Dorsolateral prefrontal cortex (tissue), 120 donors: ENCODE measurements at regions of chr1 and their contacts with region 1.

Region 1: DNA sequence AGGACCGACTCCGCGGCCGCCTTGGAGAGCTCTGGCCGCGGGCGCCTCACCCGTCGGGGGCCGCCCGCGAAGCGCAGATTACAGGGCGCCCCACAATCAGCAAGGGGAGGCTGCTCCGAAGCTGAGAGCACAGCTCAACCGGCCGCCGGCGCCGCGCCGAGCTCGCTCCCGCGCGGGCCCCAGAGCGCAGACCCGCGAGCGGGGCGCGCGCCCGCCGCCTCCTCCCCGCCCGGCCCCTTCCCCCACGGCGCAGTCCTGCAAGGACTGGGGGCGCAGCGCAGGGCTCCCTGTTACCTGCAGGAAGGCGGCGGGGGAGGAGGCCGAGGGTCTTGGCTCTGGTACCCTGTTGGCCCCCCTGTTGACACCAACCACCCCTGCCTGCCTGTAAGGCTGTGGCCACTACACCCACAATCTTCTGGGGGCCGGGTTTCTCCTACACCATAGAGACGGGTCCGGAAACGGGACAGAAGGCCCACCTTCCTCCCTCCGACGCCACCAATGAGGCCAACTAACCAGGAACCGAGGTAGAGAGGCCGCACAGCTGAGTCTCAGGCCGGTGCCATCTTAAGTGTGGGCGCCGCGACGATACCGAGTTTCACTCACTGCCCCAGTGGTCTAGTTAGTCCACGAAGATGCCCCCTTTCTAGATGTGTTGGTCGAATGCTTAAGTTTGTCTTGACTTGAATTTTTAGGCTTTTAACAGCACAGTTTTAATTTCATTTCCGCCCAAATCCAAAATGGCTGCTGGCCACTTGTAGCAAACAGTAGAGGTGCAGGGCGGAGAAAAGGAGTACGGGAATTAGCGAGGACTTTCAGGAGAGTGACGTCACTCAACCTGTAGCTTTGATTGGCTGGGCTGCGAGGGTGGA is at the start of gene SCYL3:
- DNase-seq: peak; percentile 83 to 97 (median 96)
- H3K4me3 ChIP-seq: peak within 1 kb of the TSS; percentile 50 to 99 (median 91)
- H3K27ac ChIP-seq: peak within 1 kb of the TSS; percentile 83 to 100 (median 99)
- H3K27me3 ChIP-seq: no peaks in the 10 kb centered on the region
- CTCF ChIP-seq: peak in 23 of 56 donors; percentile 2 to 60 (median 14)
- total RNA-seq, gene SCYL3: 5.2 to 13.9 (median 10.1) TPM

Region 2: GRCh38 chr1:169031566-169032201 is 862.0 kb before region 1 on chr1:
- intact Hi-C with region 1: no loop called
- DNase-seq: no peak
- H3K4me3 ChIP-seq: no peak overlapping the region
- H3K27ac ChIP-seq: no peak overlapping the region
- H3K27me3 ChIP-seq: no peaks in the 10 kb centered on the region
- CTCF ChIP-seq: no peak

Region 3: GRCh38 chr1:169753552-169753951 is 140.2 kb before region 1 on chr1:
- intact Hi-C with region 1: no loop called
- DNase-seq: no peak
- H3K4me3 ChIP-seq: no peak overlapping the region
- H3K27ac ChIP-seq: no peak overlapping the region
- H3K27me3 ChIP-seq: peaks cover 0 to 4% (median 0%) of the 10 kb centered on the region in 45 donors
- CTCF ChIP-seq: no peak

Region 4: DNA sequence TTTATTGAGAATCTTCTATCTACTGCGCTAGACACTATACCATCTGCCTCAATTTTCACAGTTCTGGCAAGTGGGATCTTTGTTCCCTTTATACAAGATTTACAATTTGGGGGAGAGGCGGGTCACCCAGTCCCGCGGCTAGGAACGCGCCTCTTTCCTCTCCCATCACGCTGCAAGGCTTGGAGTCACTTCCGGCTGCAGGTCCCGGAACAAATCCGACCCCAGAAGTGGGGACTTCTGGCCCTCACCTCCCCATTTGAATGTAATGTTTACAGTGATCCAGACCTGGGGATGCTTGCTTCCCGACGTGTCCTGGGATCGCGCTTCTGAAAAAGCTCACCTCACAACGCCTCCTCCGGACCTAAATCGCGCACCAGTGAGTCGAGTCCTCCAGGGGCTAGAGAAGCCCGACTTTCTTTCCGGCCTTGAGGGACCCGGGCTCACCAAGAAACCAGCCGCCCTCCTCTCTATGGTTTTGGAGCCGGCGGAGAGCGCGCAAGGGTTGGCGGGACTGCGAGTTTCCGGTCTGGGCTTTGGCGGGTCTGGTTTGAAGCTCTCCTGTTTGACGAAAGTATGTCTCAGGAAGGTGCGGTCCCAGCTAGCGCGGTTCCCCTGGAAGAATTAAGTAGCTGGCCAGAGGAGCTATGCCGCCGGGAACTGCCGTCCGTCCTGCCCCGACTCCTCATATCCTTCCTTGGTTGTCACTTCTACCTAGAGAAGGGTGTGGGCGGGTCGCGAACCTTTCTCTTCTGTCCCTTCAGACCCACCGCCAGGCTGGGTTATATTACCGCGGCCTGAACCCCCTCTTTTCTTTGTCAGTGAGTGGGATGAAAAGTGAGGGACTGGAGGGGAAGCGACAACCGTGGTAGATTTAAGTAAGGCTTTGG is 99.0 kb before region 1 on chr1 and contains the start of gene METTL18:
- intact Hi-C with region 1: loop called (anchors 1 to 2 kb)
- DNase-seq: peak; percentile 82 to 95 (median 93)
- H3K4me3 ChIP-seq: peak within 1 kb of the TSS; percentile 49 to 100 (median 78)
- H3K27ac ChIP-seq: peak within 1 kb of the TSS; percentile 57 to 97 (median 91)
- H3K27me3 ChIP-seq: no peaks in the 10 kb centered on the region
- CTCF ChIP-seq: peak in 46 of 56 donors; percentile 8 to 78 (median 42)
- total RNA-seq, gene METTL18: 2.6 to 8.9 (median 5.6) TPM

Region 5: DNA sequence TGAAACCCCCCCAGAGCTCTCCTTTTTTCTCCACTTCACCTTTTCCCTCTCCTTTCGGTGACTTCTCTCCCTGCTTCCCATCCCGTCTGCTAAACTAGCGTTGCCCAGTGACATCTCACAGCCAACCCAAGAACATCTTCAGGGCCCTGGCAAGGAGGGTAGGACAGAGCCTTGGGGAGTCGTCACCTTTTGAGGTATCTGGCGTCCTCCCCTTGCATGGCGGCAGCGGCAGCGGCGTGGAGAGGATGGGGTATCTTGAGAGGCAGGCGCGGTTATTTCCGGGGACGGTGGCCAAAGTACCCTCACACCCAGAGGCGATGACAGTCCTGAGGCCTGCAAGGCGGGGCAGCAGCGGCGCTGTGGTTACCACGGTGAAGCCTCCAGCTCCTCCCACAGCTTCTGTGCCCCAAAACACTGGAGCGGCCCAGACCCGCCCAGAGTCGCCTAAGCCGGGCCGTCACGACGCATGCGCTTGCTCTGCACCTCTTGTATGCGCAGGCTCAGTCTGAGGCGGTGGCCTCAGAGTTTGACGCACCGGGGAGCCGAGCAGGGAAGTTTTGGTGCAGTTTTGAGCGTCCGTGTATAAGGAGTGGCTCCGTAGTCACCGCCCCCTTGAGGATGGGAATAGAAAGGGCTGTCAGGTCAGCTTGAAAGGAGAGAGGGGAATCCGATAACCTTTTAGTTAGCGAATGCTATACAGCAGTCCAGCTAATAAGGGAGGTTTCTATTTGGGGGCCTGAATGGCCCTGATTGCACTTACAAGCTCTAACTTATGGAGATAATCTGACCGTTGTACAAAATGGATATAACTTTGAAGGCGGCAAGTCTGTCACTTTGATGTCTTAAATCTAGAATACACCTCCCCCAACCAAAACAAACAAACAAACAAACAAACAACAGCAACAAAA is 180.8 kb after region 1 on chr1 and contains the start of gene KIFAP3:
- intact Hi-C with region 1: loop called (anchors 1 to 10 kb)
- DNase-seq: peak; percentile 83 to 96 (median 92)
- H3K4me3 ChIP-seq: peak within 1 kb of the TSS; percentile 48 to 92 (median 81)
- H3K27ac ChIP-seq: peak within 1 kb of the TSS; percentile 9 to 91 (median 76)
- H3K27me3 ChIP-seq: no peaks in the 10 kb centered on the region
- CTCF ChIP-seq: peak in 54 of 56 donors; percentile 34 to 78 (median 62)
- total RNA-seq, gene KIFAP3: 57.4 to 189 (median 134) TPM

Region 6: GRCh38 chr1:170531758-170532657 is 638.3 kb after region 1 on chr1 and contains the start of gene GORAB:
- intact Hi-C with region 1: no loop called
- DNase-seq: peak; percentile 83 to 94 (median 92)
- H3K4me3 ChIP-seq: peak within 1 kb of the TSS; percentile 56 to 92 (median 77)
- H3K27ac ChIP-seq: peak within 1 kb of the TSS; percentile 54 to 94 (median 85)
- H3K27me3 ChIP-seq: no peaks in the 10 kb centered on the region
- CTCF ChIP-seq: peak in 12 of 56 donors; percentile 6 to 29 (median 15)
- total RNA-seq, gene GORAB: 5.4 to 20.8 (median 11.4) TPM